ENCODE measurements at regions of chr20 and their contacts with region 1.

Region 1: GRCh38 chr20:44733341-44734069 is 12.2 kb upstream of the KCNK15 start:
- DNase-seq: peak; percentile 80
- ATAC-seq: peak; percentile 51

Region 2: DNA sequence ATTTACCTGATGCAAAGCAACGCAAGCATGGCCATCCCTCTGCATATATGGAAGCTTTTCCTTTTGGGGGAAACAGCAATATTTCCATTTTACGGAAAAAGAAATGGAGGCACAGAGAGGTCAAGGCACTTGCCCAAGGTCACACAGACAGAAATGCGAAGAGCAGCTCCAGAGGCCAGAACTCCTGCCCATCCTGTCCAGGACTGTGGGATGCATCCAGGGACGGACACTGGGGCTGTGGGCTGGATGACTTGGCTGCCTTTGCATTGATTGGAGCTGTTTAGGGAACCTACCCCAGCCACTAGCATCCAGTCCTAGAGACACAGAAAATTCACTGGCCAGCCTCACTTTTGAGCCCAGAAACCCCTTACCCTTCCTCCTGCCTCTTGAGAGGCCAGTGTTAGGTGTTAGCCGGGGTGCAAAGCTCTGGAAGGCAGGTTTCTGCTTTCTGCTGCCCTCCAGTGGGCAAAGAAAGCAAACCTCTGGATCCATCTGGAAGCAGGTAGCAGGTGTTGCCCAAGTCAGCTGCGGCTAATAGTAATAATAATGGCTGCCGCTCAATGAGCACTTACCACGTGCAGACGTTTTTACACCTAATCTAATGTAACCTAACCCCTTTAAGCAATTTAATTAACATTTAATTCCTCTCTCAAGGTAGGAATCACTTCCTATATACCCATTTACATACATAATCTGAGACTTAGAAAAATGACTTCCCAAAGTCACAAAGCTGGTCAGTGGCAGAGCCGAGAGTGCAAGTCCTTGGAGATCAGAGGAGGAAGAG is 50.0 kb before region 1 on chr20:
- intact Hi-C with region 1: loop called (anchors 2 kb)
- DNase-seq: peak; percentile 53
- ATAC-seq: peak; percentile 74